ENCODE measurements at regions of chr11 and their contacts with region 1.

Region 1: DNA sequence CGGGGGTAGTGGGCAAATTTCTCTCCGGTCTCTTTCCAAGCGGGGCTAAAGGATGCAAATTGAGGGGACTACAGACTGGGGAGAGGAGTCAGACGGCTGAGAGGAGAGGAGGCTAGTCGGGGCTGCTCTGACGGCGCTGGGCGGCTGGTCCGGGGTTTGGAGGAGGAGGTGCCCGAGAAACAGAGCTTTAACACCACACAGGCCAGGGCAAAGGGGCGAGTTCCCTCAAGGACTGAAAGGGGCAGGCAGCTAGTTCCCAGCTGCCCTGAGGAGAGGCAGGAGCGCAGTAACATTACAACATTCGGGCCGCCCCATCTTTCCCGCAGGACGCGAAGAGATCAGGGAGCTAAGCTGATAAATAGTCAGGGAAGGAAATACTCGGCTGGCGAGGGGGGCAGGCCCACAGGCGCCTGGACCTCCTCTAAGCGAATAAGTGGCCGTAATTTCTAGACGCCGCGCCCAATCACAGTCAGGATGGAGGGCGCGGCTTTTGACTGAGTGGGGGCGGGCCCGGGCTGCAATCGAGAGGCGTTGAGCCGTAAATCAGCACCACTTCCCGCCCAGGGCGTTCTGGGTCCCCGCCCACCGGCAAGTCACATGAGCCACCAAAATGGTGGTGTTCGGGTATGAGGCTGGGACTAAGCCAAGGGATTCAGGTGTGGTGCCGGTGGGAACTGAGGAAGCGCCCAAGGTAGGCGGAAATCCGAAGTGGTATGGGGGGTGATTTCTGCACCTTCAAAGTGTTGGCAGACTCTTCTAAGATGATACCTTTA is at the start of gene TMEM126B:
- DNase-seq: peak; percentile 94 to 96
- ATAC-seq: peak; percentile 96 to 100 (median 97)
- H3K4me3 ChIP-seq: peak within 1 kb of the TSS; percentile 69
- H3K4me3 Mint-ChIP-seq: peak within 1 kb of the TSS; percentile 98
- H3K27ac ChIP-seq: peak within 1 kb of the TSS; percentile 78
- H3K27ac Mint-ChIP-seq: peak within 1 kb of the TSS; percentile 95 to 100
- H3K4me1 ChIP-seq: peaks cover 6% of the 10 kb centered on the region
- H3K4me1 Mint-ChIP-seq: peaks cover 27 to 29% of the 10 kb centered on the region in 2 donors
- H3K27me3 ChIP-seq: no peaks in the 10 kb centered on the region
- H3K27me3 Mint-ChIP-seq: peaks cover 0 to 14% of the 10 kb centered on the region in 2 donors
- CTCF ChIP-seq: no peak
- total RNA-seq, gene TMEM126B: 29.4 to 38.6 (median 31.2) TPM

Region 2: DNA sequence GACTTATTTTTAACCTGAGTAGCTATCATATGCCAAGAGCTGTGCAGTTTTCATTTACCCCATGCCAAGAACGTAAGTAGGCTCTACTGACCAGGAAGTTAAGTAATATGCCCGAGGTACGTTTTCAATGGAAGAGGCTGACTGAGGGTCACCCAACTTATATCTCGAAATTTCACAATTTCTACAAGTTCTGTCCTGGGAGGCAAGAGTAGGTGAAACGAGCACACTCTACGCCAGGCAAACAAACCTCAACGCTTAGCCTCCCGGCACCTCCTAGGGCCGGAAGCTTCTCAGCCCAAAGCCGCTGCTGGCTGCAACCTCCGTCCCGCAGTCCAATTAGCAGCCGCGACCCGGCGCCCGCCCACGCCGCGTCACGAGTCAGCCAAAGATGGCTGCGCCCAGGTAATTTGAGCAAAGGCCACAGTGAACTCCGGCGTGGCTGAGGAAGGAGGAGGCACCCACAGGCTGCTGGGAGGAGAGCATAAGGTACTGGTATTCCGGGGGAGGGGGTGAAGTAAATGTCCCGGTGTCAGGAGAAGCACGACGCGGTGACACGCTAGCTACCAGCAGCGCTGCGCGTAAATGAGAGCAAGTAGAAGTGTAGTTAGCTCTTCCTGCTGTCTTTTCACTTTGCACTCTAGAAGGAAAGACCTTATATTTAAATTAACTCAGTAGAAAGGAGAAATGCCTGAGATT is 19.6 kb after region 1 on chr11 and contains the start of gene TMEM126A:
- intact Hi-C with region 1: loop called (anchors 1 kb)
- DNase-seq: peak; percentile 86 to 94
- ATAC-seq: peak; percentile 99 to 100 (median 99)
- H3K4me3 ChIP-seq: peak within 1 kb of the TSS; percentile 79
- H3K4me3 Mint-ChIP-seq: peak within 1 kb of the TSS; percentile 100
- H3K27ac ChIP-seq: peak within 1 kb of the TSS; percentile 68
- H3K27ac Mint-ChIP-seq: peak within 1 kb of the TSS; percentile 94 to 98
- H3K4me1 ChIP-seq: peaks cover 8% of the 10 kb centered on the region
- H3K4me1 Mint-ChIP-seq: peaks cover 27 to 28% of the 10 kb centered on the region in 2 donors
- H3K27me3 ChIP-seq: peaks cover 10% of the 10 kb centered on the region
- H3K27me3 Mint-ChIP-seq: peaks cover 25 to 31% of the 10 kb centered on the region in 2 donors
- CTCF ChIP-seq: no peak
- total RNA-seq, gene TMEM126A: 16.8 to 27.6 (median 23.2) TPM

Region 3: DNA sequence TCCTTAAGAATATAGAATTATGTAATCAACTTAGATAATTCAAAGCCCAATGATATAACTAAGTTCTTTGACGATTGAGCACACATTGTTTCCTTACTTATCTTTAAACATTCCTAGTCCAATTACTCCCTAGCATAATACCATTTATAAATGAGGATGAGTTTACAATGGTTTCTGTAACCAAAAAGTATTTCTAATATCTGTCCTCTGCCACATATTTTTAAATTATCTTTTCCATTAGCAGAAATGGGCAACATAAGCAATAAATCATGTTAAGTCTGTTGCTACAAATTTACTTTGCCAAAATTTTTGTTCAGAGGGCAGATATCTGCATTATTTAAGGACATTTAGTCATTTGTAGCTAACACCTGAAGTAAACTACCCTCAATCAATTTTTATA is 30.0 kb after region 1 on chr11:
- intact Hi-C with region 1: no loop called
- DNase-seq: no peak
- ATAC-seq: no peak
- H3K4me3 ChIP-seq: no peak overlapping the region
- H3K4me3 Mint-ChIP-seq: no peak overlapping the region
- H3K27ac ChIP-seq: no peak overlapping the region
- H3K27ac Mint-ChIP-seq: peak overlapping the region in 1 of 2 donors; percentile 79
- H3K4me1 ChIP-seq: peaks cover 9% of the 10 kb centered on the region
- H3K4me1 Mint-ChIP-seq: peaks cover 45 to 54% of the 10 kb centered on the region in 2 donors
- H3K27me3 ChIP-seq: no peaks in the 10 kb centered on the region
- H3K27me3 Mint-ChIP-seq: no peaks in the 10 kb centered on the region
- CTCF ChIP-seq: no peak